ENCODE measurements at regions of chr9 and their contacts with region 1.

Region 1: GRCh38 chr9:103458826-103459225 is 463.7 kb downstream of the CYLC2 start:
- DNase-seq: no peak
- ATAC-seq: no peak
- H3K4me3 ChIP-seq: no peak overlapping the region
- H3K4me3 Mint-ChIP-seq: no peak overlapping the region
- H3K27ac ChIP-seq: no peak overlapping the region
- H3K27ac Mint-ChIP-seq: no peak overlapping the region
- H3K4me1 ChIP-seq: no peaks in the 10 kb centered on the region
- H3K4me1 Mint-ChIP-seq: no peaks in the 10 kb centered on the region
- H3K27me3 ChIP-seq: no peaks in the 10 kb centered on the region
- H3K27me3 Mint-ChIP-seq: no peaks in the 10 kb centered on the region
- CTCF ChIP-seq: no peak

Region 2: GRCh38 chr9:103335461-103335860 is 123.4 kb before region 1 on chr9:
- CTCF ChIA-PET with region 1: no interaction called
- POLR2A ChIA-PET with region 1: no interaction called
- intact Hi-C with region 1: no loop called
- DNase-seq: no peak
- ATAC-seq: no peak
- H3K4me3 ChIP-seq: no peak overlapping the region
- H3K4me3 Mint-ChIP-seq: no peak overlapping the region
- H3K27ac ChIP-seq: no peak overlapping the region
- H3K27ac Mint-ChIP-seq: no peak overlapping the region
- H3K4me1 ChIP-seq: no peaks in the 10 kb centered on the region
- H3K4me1 Mint-ChIP-seq: no peaks in the 10 kb centered on the region
- H3K27me3 ChIP-seq: no peaks in the 10 kb centered on the region
- H3K27me3 Mint-ChIP-seq: no peaks in the 10 kb centered on the region
- CTCF ChIP-seq: no peak

Region 3: GRCh38 chr9:103444176-103444575 is 14.7 kb before region 1 on chr9:
- CTCF ChIA-PET with region 1: no interaction called
- POLR2A ChIA-PET with region 1: no interaction called
- intact Hi-C with region 1: loop called in 1 of 2 experiments (anchors 1 kb)
- DNase-seq: no peak
- ATAC-seq: no peak
- H3K4me3 ChIP-seq: no peak overlapping the region
- H3K4me3 Mint-ChIP-seq: no peak overlapping the region
- H3K27ac ChIP-seq: no peak overlapping the region
- H3K27ac Mint-ChIP-seq: no peak overlapping the region
- H3K4me1 ChIP-seq: no peaks in the 10 kb centered on the region
- H3K4me1 Mint-ChIP-seq: no peaks in the 10 kb centered on the region
- H3K27me3 ChIP-seq: no peaks in the 10 kb centered on the region
- H3K27me3 Mint-ChIP-seq: no peaks in the 10 kb centered on the region
- CTCF ChIP-seq: no peak

Measured in CD8-positive, alpha-beta T cell (primary cell).